Breast epithelium (tissue), 4 donors: ENCODE measurements at regions of chr5 and their contacts with region 1.

Region 1: GRCh38 chr5:93008502-93009207 is 572.4 kb downstream of the NR2F1-AS1 start:
- DNase-seq: no peak
- H3K4me3 ChIP-seq: no peak overlapping the region
- H3K27ac ChIP-seq: no peak overlapping the region
- H3K4me1 ChIP-seq: no peaks in the 10 kb centered on the region
- H3K27me3 ChIP-seq: no peaks in the 10 kb centered on the region
- CTCF ChIP-seq: no peak
- POLR2A ChIP-seq: no peak

Region 2: GRCh38 chr5:92969781-92970237 is 38.8 kb before region 1 on chr5:
- intact Hi-C with region 1: loop called (anchors 2 kb)
- DNase-seq: no peak
- H3K4me3 ChIP-seq: no peak overlapping the region
- H3K27ac ChIP-seq: no peak overlapping the region
- H3K4me1 ChIP-seq: no peaks in the 10 kb centered on the region
- H3K27me3 ChIP-seq: no peaks in the 10 kb centered on the region
- CTCF ChIP-seq: no peak
- POLR2A ChIP-seq: no peak

Region 3: GRCh38 chr5:93022799-93023447 is 14.3 kb after region 1 on chr5:
- intact Hi-C with region 1: no loop called
- DNase-seq: no peak
- H3K4me3 ChIP-seq: no peak overlapping the region
- H3K27ac ChIP-seq: no peak overlapping the region
- H3K4me1 ChIP-seq: no peaks in the 10 kb centered on the region
- H3K27me3 ChIP-seq: no peaks in the 10 kb centered on the region
- CTCF ChIP-seq: no peak
- POLR2A ChIP-seq: no peak